ENCODE measurements at regions of chr17 and their contacts with region 1.

Region 1: GRCh38 chr17:2064980-2065785 is 10.3 kb downstream of the HIC1 start:
- DNase-seq: peak; percentile 82
- H3K4me3 ChIP-seq: no peak overlapping the region
- CTCF ChIP-seq: peak; percentile 69

Region 2: GRCh38 chr17:1716076-1716995 is 348.8 kb before region 1 on chr17:
- in situ Hi-C with region 1: no loop called
- DNase-seq: peak; percentile 100
- H3K4me3 ChIP-seq: peak overlapping the region; percentile 93
- CTCF ChIP-seq: peak; percentile 14

Region 3: DNA sequence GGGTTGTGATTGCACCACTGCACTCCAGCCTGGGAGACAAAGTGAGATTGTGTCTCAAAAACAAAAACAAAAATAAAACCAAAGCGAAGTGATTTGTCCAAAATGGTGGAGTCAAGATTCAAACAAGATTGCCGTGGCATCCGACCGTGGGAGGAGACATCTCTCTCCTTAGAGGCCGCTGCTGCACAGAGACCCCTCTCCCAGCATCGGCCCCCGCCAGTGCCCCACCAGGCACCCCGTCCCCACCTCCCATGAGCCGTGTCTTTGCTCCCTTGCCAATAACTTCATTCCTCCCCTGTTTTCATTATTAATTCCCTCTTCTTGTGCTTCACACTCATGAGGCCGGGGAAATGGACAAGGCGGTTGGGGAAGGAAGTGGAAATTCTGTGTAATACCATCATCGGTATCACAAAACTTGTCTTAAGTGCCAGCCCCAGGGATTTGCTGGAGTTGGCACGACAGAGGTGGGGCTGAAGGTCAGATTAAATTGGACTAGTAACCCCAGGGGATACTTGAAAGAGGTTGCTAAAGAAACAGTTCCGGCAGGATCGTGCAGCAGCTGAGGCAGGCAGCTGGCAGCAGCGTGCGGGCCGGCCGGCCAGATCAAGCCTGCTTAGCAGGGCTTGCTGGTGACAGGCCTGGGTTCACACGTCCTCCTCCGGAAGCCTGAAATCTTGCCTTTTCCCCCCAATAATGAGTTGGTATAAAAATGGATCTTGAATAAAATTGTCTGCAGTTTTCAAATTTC is 106.9 kb before region 1 on chr17:
- in situ Hi-C with region 1: no loop called
- DNase-seq: no peak
- H3K4me3 ChIP-seq: no peak overlapping the region
- CTCF ChIP-seq: no peak

Region 4: DNA sequence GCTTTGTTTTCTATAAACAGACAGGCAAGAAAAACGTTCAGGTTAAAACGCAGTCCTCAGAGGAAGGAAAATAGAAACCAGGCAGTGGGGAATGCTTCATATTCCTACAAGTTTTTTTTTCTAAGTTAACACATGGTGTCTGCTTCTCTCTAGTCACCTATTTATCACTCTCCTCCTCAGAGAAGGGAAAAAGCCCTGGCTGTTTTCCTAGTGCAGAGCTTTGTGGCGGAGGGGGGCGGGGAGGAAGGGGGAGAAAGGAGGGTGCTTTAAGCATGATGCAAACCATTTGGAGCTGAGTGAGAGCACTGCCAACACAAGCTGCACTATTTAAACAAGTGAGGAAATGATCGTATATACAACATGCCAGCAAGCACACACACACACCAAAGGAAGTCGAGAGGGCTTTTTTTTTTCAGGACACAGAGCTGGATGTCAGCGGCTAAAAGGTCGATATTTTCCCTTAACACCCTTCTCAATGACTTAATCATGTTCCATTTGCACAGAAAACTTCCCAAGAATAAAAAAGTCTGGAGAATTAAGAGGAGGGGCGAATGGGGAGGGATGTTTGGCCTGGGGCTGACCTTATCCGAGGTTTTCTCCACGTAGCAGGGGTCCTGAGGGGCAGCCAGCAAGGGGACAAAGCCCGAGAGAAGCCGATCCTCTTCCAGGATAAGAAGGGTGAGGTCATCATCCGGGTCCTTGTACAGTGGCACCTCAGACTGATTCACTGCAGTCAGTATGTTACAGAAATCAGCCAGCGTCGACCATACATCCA is 107.1 kb after region 1 on chr17:
- in situ Hi-C with region 1: loop called (anchors 10 kb)
- DNase-seq: peak; percentile 99
- H3K4me3 ChIP-seq: no peak overlapping the region
- CTCF ChIP-seq: no peak

Region 5: GRCh38 chr17:2192367-2193057 is 127.3 kb after region 1 on chr17:
- in situ Hi-C with region 1: no loop called
- DNase-seq: peak; percentile 97
- H3K4me3 ChIP-seq: no peak overlapping the region
- CTCF ChIP-seq: no peak

Region 6: DNA sequence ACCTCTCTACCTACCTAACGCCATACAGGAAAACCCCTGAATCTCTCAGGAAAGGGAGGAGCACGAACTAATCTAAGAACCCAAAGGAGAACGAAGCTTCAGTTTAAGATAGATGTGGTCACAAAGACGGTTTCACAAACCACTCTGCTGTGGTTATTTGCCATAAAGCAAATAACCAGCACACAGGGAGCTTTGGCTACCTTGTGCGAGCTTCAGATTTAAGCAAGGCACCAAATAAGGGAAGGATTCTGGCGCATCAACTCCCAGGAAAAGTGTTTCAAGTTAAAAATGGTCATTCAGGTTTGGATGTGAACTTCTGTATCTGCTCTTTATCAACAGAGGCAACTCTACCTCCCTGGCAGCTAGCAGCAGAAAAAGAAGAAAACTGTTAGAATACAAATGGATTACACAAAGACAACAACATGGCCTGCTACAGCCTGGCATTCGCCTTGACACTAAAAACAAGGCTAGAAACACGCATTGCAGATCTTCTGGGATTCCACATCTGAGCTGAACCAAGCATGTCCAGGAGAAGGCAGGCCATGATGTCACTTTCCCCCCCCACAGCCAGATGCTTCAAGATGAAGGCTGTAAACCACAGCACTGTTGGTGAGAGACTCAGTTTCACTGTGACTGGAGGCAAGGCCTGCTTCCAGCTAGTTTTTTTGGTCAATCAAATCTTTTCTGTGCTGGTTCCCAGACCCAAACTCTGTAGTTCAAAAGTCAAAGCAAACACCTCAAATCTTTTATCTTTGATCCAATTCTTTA is 194.8 kb after region 1 on chr17:
- in situ Hi-C with region 1: no loop called
- DNase-seq: peak; percentile 54
- H3K4me3 ChIP-seq: no peak overlapping the region
- CTCF ChIP-seq: no peak

Measured in astrocyte of the spinal cord (primary cell).